ENCODE measurements at regions of chr10 and their contacts with region 1.

Region 1: DNA sequence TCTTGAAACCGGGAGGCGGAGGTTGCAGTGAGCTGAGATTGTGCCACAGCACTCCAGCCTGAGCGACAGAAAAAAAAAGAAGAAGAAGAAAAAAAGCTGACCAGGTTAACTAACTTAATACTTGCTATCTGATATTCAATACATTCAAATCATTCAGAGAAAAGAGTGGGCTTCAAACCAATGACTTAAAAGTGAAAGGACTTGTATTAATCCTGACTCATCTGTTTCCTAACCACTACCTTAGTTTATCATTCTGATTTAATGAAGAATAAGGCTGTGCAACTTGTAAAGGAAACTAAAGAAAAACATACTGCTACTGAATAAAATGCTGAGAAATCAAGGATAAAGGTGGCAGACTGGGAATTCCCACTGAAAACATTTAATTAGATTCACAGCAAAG is 128.4 kb downstream of the NRBF2 start:
- DNase-seq: no peak
- H3K4me3 Mint-ChIP-seq: peak overlapping the region; percentile 15
- H3K27ac Mint-ChIP-seq: peak overlapping the region; percentile 69
- H3K4me1 Mint-ChIP-seq: peaks cover 64% of the 10 kb centered on the region
- H3K27me3 Mint-ChIP-seq: no peaks in the 10 kb centered on the region

Region 2: GRCh38 chr10:63227207-63227915 is 34.1 kb before region 1 on chr10:
- CTCF ChIA-PET with region 1: interaction called, 15 read pairs
- intact Hi-C with region 1: loop called (anchors 1 kb)
- DNase-seq: no peak
- H3K4me3 Mint-ChIP-seq: no peak overlapping the region
- H3K27ac Mint-ChIP-seq: peak overlapping the region; percentile 97
- H3K4me1 Mint-ChIP-seq: peaks cover 56% of the 10 kb centered on the region
- H3K27me3 Mint-ChIP-seq: no peaks in the 10 kb centered on the region

Region 3: DNA sequence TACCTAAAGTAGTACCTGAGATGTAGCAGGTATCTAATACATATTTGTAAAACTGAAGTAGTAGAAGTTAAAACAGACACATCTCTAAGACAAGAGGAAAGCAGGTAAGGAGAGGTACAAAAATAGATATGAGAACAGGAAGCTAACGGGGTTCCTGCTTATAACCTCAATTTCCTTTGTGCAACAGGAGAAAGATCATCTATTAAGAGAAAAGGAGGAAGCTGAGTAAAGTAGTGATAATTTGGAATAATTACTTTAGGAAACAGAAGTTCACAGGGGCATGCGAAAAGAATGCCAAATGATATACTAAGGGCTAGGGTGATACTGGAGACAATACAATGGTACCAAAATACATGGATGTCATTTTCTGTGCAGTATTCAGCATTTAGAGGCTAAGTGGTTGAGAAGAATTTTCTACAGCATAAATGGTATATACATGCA is 19.6 kb before region 1 on chr10:
- CTCF ChIA-PET with region 1: interaction called, 3 read pairs
- intact Hi-C with region 1: loop called (anchors 1 kb)
- DNase-seq: no peak
- H3K4me3 Mint-ChIP-seq: peak overlapping the region; percentile 7
- H3K27ac Mint-ChIP-seq: peak overlapping the region; percentile 52
- H3K4me1 Mint-ChIP-seq: peaks cover 76% of the 10 kb centered on the region
- H3K27me3 Mint-ChIP-seq: no peaks in the 10 kb centered on the region